ENCODE measurements at regions of chr15 and their contacts with region 1.

Region 1: DNA sequence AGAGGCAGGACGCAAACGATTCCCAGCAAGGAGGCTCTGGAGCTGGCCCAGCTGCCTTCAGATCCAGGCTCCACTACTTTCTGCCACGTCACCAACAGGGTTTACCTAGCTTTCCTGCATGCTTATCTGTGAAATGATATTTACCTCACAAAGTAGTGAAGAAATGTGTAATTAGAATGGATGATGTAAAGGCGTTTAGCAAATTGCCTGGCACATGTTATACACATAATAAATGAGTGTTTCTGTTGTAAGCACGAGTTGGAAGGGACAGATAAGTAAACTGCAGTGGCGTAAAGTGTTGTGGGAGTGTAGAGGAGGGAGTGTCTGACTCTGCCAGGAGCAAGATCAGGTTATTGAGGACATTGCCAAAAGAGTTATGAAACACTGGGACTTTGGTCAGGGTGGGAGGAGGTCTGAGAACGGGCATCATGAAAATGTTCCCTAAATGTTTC is 3.5 kb upstream of the CHAC1 start:
- DNase-seq: no peak
- ATAC-seq: no peak
- H3K4me3 ChIP-seq: no peak overlapping the region
- H3K27ac ChIP-seq: no peak overlapping the region
- H3K4me1 ChIP-seq: peaks cover 0 to 33% (median 14%) of the 10 kb centered on the region in 9 donors
- H3K27me3 ChIP-seq: no peaks in the 10 kb centered on the region
- CTCF ChIP-seq: no peak

Region 2: GRCh38 chr15:41013698-41014414 is 64.1 kb after region 1 on chr15:
- intact Hi-C with region 1: loop called in 6 of 10 experiments (anchors 5 to 10 kb)
- DNase-seq: no peak
- ATAC-seq: no peak
- H3K4me3 ChIP-seq: no peak overlapping the region
- H3K27ac ChIP-seq: peak overlapping the region in 2 of 10 donors; percentile 8 to 12
- H3K4me1 ChIP-seq: peaks cover 0 to 58% (median 32%) of the 10 kb centered on the region in 9 donors
- H3K27me3 ChIP-seq: no peaks in the 10 kb centered on the region
- CTCF ChIP-seq: no peak

Region 3: DNA sequence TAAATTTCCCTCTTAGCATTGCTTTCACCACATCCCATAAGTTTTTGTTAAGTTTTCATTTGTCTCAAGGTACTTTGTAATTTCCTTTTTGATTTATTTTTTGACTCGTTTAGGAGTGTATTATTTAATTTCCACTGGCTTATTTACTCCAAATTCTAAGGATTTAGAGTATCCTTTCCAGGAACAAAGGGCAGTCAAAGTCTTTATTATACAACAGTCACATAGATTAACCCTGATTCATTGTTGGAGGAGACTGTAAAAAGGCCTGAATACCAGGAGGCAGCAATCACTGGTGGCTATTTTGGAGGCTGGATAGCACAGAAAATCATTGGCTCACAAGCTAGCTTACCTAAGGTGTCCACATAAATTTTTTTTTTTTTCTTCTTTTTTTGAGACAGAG is 342.7 kb after region 1 on chr15:
- intact Hi-C with region 1: no loop called
- DNase-seq: no peak
- ATAC-seq: no peak
- H3K4me3 ChIP-seq: no peak overlapping the region
- H3K27ac ChIP-seq: peak overlapping the region in 1 of 10 donors; percentile 4
- H3K4me1 ChIP-seq: peaks cover 0 to 36% (median 14%) of the 10 kb centered on the region in 9 donors
- H3K27me3 ChIP-seq: no peaks in the 10 kb centered on the region
- CTCF ChIP-seq: no peak